MCF 10A (cell line): ENCODE measurements at regions of chr10 and their contacts with region 1.

Region 1: GRCh38 chr10:71212318-71213126 is at the start of gene UNC5B:
- DNase-seq: peak; percentile 88
- H3K4me3 Mint-ChIP-seq: peak within 1 kb of the TSS; percentile 64
- H3K27ac Mint-ChIP-seq: no peak within 1 kb of the TSS
- H3K4me1 Mint-ChIP-seq: peaks cover 20% of the 10 kb centered on the region
- H3K27me3 Mint-ChIP-seq: peaks cover 26% of the 10 kb centered on the region
- CTCF ChIP-seq: peak; percentile 24
- total RNA-seq, gene UNC5B: 80.5 and 82.4 TPM in 2 replicates

Region 2: GRCh38 chr10:70815504-70816219 is 396.9 kb before region 1 on chr10 and contains the start of gene SGPL1:
- CTCF ChIA-PET with region 1: no interaction called
- POLR2A ChIA-PET with region 1: no interaction called
- intact Hi-C with region 1: loop called (anchors 5 kb)
- DNase-seq: peak; percentile 79
- H3K4me3 Mint-ChIP-seq: peak within 1 kb of the TSS; percentile 93
- H3K27ac Mint-ChIP-seq: peak within 1 kb of the TSS; percentile 75
- H3K4me1 Mint-ChIP-seq: peaks cover 10% of the 10 kb centered on the region
- H3K27me3 Mint-ChIP-seq: no peaks in the 10 kb centered on the region
- CTCF ChIP-seq: peak; percentile 96
- total RNA-seq, gene SGPL1: 81.5 and 93.8 TPM in 2 replicates

Region 3: GRCh38 chr10:70925377-70926225 is 286.9 kb before region 1 on chr10:
- CTCF ChIA-PET with region 1: interaction called, 44 read pairs
- POLR2A ChIA-PET with region 1: interaction called, 3 read pairs
- intact Hi-C with region 1: loop called (anchors 1 kb)
- DNase-seq: peak; percentile 36
- H3K4me3 Mint-ChIP-seq: no peak overlapping the region
- H3K27ac Mint-ChIP-seq: no peak overlapping the region
- H3K4me1 Mint-ChIP-seq: peaks cover 7% of the 10 kb centered on the region
- H3K27me3 Mint-ChIP-seq: peaks cover 37% of the 10 kb centered on the region
- CTCF ChIP-seq: peak; percentile 94

Region 4: GRCh38 chr10:70967596-70968587 is 244.6 kb before region 1 on chr10:
- CTCF ChIA-PET with region 1: no interaction called
- POLR2A ChIA-PET with region 1: no interaction called
- intact Hi-C with region 1: no loop called
- DNase-seq: peak; percentile 2
- H3K4me3 Mint-ChIP-seq: no peak overlapping the region
- H3K27ac Mint-ChIP-seq: no peak overlapping the region
- H3K4me1 Mint-ChIP-seq: no peaks in the 10 kb centered on the region
- H3K27me3 Mint-ChIP-seq: peaks cover 31% of the 10 kb centered on the region
- CTCF ChIP-seq: no peak

Region 5: GRCh38 chr10:71255808-71256660 is 43.5 kb after region 1 on chr10:
- CTCF ChIA-PET with region 1: interaction called, 4 read pairs
- POLR2A ChIA-PET with region 1: interaction called, 25 read pairs
- intact Hi-C with region 1: no loop called
- DNase-seq: peak; percentile 89
- H3K4me3 Mint-ChIP-seq: peak overlapping the region; percentile 62
- H3K27ac Mint-ChIP-seq: peak overlapping the region; percentile 28
- H3K4me1 Mint-ChIP-seq: peaks cover 56% of the 10 kb centered on the region
- H3K27me3 Mint-ChIP-seq: no peaks in the 10 kb centered on the region
- CTCF ChIP-seq: no peak

Region 6: GRCh38 chr10:71285180-71285545 is 72.6 kb after region 1 on chr10:
- CTCF ChIA-PET with region 1: interaction called, 15 read pairs
- POLR2A ChIA-PET with region 1: interaction called, 3 read pairs
- intact Hi-C with region 1: loop called (anchors 1 kb)
- DNase-seq: peak; percentile 55
- H3K4me3 Mint-ChIP-seq: no peak overlapping the region
- H3K27ac Mint-ChIP-seq: no peak overlapping the region
- H3K4me1 Mint-ChIP-seq: no peaks in the 10 kb centered on the region
- H3K27me3 Mint-ChIP-seq: no peaks in the 10 kb centered on the region
- CTCF ChIP-seq: peak; percentile 71

Region 7: GRCh38 chr10:71297343-71297742 is 84.8 kb after region 1 on chr10:
- CTCF ChIA-PET with region 1: no interaction called
- POLR2A ChIA-PET with region 1: no interaction called
- intact Hi-C with region 1: no loop called
- DNase-seq: no peak
- H3K4me3 Mint-ChIP-seq: no peak overlapping the region
- H3K27ac Mint-ChIP-seq: no peak overlapping the region
- H3K4me1 Mint-ChIP-seq: peaks cover 6% of the 10 kb centered on the region
- H3K27me3 Mint-ChIP-seq: no peaks in the 10 kb centered on the region
- CTCF ChIP-seq: no peak